CD8-positive, alpha-beta memory T cell (primary cell): ENCODE measurements at regions of chr7 and their contacts with region 1.

Region 1: GRCh38 chr7:106736508-106737201 is 75.7 kb upstream of the CCDC71L start:
- DNase-seq: peak in 4 of 5 donors; percentile 6 to 53 (median 36)
- H3K4me3 ChIP-seq: no peak overlapping the region
- H3K4me3 Mint-ChIP-seq: no peak overlapping the region
- H3K27ac ChIP-seq: no peak overlapping the region
- H3K27ac Mint-ChIP-seq: peak overlapping the region in 3 of 8 donors; percentile 38 to 69 (median 68)
- H3K4me1 ChIP-seq: no peaks in the 10 kb centered on the region
- H3K4me1 Mint-ChIP-seq: peaks cover 11 to 20% (median 15%) of the 10 kb centered on the region in 3 donors
- H3K27me3 ChIP-seq: no peaks in the 10 kb centered on the region
- H3K27me3 Mint-ChIP-seq: peaks cover 0 to 2% of the 10 kb centered on the region in 2 donors

Region 2: DNA sequence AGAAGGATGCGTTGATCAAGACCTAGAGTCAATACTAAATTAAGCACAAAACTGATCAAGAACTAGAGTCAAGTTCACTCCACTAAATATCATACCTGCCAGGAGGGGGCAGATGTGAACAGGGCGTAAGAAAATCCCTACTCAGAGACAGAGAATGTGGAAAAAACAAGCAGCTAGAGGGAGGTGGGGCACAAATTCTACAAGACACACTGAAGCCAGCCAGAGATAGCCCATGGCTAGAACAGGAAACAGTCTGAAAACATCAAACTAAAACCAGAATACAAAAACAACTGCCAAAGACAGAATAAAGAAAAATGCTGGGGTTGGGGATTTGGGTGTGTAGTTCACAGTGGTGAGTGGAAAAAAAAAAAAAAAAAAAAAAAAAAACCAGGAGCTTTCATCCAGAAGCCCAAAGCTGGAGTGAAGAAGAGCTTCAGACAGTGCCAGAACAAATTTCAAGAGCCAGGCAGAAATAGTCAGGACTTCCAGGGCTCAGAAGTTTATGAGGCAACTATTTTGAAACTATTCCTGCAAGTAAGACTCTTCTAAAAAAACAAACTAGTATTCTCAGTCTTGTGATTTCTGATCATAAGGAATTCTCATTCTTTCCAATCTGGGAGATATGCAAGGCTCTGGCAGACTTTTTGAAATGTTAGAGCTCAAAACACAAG is 194.0 kb before region 1 on chr7:
- CTCF ChIA-PET with region 1: interaction called, 13 read pairs
- POLR2A ChIA-PET with region 1: no interaction called
- DNase-seq: peak in 1 of 5 donors; percentile 6
- H3K4me3 ChIP-seq: no peak overlapping the region
- H3K4me3 Mint-ChIP-seq: no peak overlapping the region
- H3K27ac ChIP-seq: peak overlapping the region; percentile 17
- H3K27ac Mint-ChIP-seq: no peak overlapping the region
- H3K4me1 ChIP-seq: no peaks in the 10 kb centered on the region
- H3K4me1 Mint-ChIP-seq: peaks cover 0 to 13% (median 5%) of the 10 kb centered on the region in 3 donors
- H3K27me3 ChIP-seq: no peaks in the 10 kb centered on the region
- H3K27me3 Mint-ChIP-seq: peaks cover 0 to 12% of the 10 kb centered on the region in 2 donors

Region 3: DNA sequence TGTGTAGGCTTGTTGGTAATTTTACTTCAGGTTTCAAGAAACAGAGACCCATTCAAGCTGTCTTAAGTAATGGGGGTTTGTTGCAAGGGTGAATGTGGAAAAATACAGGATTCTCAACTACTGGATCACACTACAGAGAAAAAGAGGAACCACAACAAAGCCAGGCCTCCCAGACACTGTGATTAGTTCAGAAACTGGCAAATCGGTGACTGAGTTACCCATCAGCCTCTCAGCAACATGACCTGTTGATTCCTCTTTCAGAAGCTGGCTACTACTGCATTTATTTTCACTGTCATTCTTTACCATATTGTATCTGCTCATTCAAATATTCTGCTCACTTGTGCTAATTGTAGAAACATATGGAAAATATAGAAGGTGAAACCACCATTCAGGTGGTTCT is 91.7 kb before region 1 on chr7:
- CTCF ChIA-PET with region 1: no interaction called
- POLR2A ChIA-PET with region 1: no interaction called
- DNase-seq: no peak
- H3K4me3 ChIP-seq: no peak overlapping the region
- H3K4me3 Mint-ChIP-seq: no peak overlapping the region
- H3K27ac ChIP-seq: no peak overlapping the region
- H3K27ac Mint-ChIP-seq: no peak overlapping the region
- H3K4me1 ChIP-seq: no peaks in the 10 kb centered on the region
- H3K4me1 Mint-ChIP-seq: no peaks in the 10 kb centered on the region
- H3K27me3 ChIP-seq: no peaks in the 10 kb centered on the region
- H3K27me3 Mint-ChIP-seq: peaks cover 5 to 43% of the 10 kb centered on the region in 2 donors

Region 4: GRCh38 chr7:106659963-106660861 is 76.4 kb before region 1 on chr7:
- CTCF ChIA-PET with region 1: interaction called, 48 read pairs
- POLR2A ChIA-PET with region 1: no interaction called
- DNase-seq: peak; percentile 50 to 84 (median 70)
- H3K4me3 ChIP-seq: peak overlapping the region; percentile 56
- H3K4me3 Mint-ChIP-seq: peak overlapping the region; percentile 84 to 96 (median 90)
- H3K27ac ChIP-seq: peak overlapping the region; percentile 79
- H3K27ac Mint-ChIP-seq: peak overlapping the region; percentile 71 to 98 (median 89)
- H3K4me1 ChIP-seq: peaks cover 24% of the 10 kb centered on the region
- H3K4me1 Mint-ChIP-seq: peaks cover 24 to 47% (median 39%) of the 10 kb centered on the region in 3 donors
- H3K27me3 ChIP-seq: no peaks in the 10 kb centered on the region
- H3K27me3 Mint-ChIP-seq: no peaks in the 10 kb centered on the region

Region 5: DNA sequence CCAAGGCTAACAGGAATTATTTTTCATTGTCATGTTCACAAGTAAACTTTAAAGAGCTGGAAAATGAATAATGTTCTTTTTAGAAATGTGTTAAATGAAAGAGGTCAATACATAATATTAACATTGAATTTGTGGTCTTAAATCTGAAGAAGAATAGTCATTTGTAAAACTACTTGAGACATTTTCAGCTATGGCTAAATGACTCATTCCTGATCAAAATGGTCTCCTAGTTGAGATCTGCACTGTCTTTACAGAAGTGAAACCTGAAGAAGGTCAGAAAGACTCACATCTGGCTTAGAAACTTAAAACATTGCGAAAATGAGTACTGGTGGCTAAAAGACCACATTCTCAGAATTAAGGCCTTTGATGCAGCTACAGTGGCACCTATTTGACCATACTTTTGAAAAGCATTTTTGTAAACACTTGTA is 134.3 kb after region 1 on chr7:
- CTCF ChIA-PET with region 1: no interaction called
- POLR2A ChIA-PET with region 1: no interaction called
- DNase-seq: no peak
- H3K4me3 ChIP-seq: peak overlapping the region; percentile 24
- H3K4me3 Mint-ChIP-seq: peak overlapping the region; percentile 49 to 83 (median 75)
- H3K27ac ChIP-seq: no peak overlapping the region
- H3K27ac Mint-ChIP-seq: peak overlapping the region in 7 of 8 donors; percentile 1 to 85 (median 72)
- H3K4me1 ChIP-seq: peaks cover 58% of the 10 kb centered on the region
- H3K4me1 Mint-ChIP-seq: peaks cover 76 to 93% (median 90%) of the 10 kb centered on the region in 3 donors
- H3K27me3 ChIP-seq: no peaks in the 10 kb centered on the region
- H3K27me3 Mint-ChIP-seq: no peaks in the 10 kb centered on the region